ENCODE measurements at regions of chr13 and their contacts with region 1.

Region 1: GRCh38 chr13:26051657-26052311 is at the start of gene SHISA2:
- DNase-seq: peak; percentile 15
- H3K4me3 Mint-ChIP-seq: peak within 1 kb of the TSS; percentile 81
- H3K27ac Mint-ChIP-seq: peak within 1 kb of the TSS; percentile 72
- H3K4me1 Mint-ChIP-seq: peaks cover 35% of the 10 kb centered on the region
- H3K27me3 Mint-ChIP-seq: peaks cover 49% of the 10 kb centered on the region
- total RNA-seq, gene SHISA2: 9.4 and 9.5 TPM in 2 replicates

Region 2: DNA sequence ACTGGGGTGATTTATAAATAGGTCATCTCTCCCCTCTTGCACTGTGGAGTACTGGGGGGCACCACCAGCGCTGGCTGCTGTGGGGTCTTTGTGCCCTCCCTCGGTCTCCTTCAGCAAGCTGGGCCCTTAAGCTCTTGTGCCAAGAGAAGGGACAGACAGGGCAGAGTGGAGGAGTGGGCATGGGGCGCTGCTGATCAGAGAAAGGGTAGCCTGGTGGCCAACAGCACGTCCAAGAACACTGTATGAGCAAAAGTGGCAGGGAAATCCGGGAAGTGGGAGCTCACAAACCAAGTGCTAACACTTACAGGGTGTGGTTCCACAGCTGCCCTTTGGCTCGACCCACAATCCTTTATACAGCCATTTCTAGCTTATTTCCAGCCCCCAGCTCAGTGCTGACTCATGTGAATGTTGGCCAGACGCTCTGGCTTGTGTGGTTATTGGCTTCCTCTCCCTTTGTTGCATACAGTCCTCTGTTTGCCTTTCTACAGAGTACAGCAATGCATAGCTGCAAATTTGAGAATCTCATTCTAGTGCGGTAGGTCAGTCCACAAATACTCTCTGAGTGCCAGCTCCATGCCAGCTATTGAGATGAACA is 298.7 kb before region 1 on chr13:
- intact Hi-C with region 1: loop called (anchors 5 kb)
- DNase-seq: peak; percentile 35
- H3K4me3 Mint-ChIP-seq: peak overlapping the region; percentile 35
- H3K27ac Mint-ChIP-seq: peak overlapping the region; percentile 32
- H3K4me1 Mint-ChIP-seq: peaks cover 46% of the 10 kb centered on the region
- H3K27me3 Mint-ChIP-seq: no peaks in the 10 kb centered on the region

Region 3: DNA sequence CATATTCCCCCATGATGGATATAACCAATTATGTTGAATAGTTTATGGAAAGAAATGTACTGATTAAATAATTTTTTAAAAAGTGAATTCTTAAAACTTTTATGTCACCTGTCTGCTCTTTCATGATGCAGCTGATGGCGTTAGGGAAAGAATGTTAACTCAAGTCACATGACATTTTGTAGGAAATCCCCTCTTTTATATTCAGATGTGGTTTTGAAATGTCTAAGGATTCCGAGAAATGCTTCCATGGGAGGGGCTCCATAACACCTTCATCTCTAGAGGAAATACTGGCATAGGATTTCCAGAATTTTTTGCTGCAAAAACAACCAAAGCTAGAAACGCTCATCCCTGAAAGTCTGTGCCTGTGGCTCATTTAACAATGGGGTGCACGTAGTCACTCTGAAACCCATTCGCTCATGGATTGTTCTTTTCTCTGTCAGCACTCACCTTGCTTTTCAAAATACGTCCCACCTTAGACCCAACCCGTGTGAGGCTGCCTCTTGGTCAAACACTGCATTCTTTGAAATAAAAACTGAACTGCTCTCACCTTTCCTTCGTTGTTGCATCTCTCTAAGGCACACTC is 288.9 kb before region 1 on chr13:
- intact Hi-C with region 1: loop called (anchors 2 kb)
- DNase-seq: peak; percentile 19
- H3K4me3 Mint-ChIP-seq: peak overlapping the region; percentile 55
- H3K27ac Mint-ChIP-seq: peak overlapping the region; percentile 93
- H3K4me1 Mint-ChIP-seq: peaks cover 51% of the 10 kb centered on the region
- H3K27me3 Mint-ChIP-seq: no peaks in the 10 kb centered on the region

Region 4: GRCh38 chr13:25806264-25806974 is 245.4 kb before region 1 on chr13:
- intact Hi-C with region 1: loop called (anchors 2 kb)
- DNase-seq: peak; percentile 11
- H3K4me3 Mint-ChIP-seq: peak overlapping the region; percentile 61
- H3K27ac Mint-ChIP-seq: peak overlapping the region; percentile 87
- H3K4me1 Mint-ChIP-seq: peaks cover 28% of the 10 kb centered on the region
- H3K27me3 Mint-ChIP-seq: no peaks in the 10 kb centered on the region

Region 5: GRCh38 chr13:25847145-25847544 is 204.6 kb before region 1 on chr13:
- intact Hi-C with region 1: loop called (anchors 5 kb)
- DNase-seq: peak; percentile 12
- H3K4me3 Mint-ChIP-seq: peak overlapping the region; percentile 54
- H3K27ac Mint-ChIP-seq: peak overlapping the region; percentile 79
- H3K4me1 Mint-ChIP-seq: peaks cover 62% of the 10 kb centered on the region
- H3K27me3 Mint-ChIP-seq: peaks cover 5% of the 10 kb centered on the region

Region 6: DNA sequence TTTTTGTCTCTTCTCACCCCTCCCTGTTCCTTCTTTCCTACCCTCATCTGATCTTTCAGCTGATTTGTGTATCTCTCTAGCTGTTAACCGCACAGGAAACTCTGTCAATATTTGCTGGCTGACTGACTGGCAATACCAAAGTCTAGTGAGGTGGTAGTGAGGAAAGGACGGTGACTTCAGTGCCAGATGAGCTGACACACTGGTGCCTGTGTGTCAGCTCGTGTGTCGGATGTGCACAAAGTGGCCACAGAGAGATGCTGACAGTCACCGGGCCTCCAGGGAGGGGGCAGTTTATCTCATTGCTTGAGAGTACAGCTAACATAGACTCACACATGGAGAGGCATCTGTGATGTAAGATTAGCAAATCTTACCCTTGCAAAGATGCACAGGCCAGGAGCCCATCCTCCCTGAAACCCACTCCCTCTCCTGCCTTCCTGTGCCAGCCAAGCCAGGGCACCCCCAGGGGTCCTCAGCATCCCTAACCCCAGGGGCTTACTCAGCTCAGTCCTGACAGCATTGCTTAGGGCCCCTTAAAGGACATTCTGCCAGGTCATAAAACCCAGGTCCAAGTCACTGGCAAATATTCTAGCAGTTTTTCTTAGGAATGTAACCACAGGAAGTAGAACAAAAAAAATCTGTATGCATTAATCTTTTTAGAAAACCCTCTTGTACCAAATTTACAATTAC is 80.2 kb before region 1 on chr13:
- intact Hi-C with region 1: loop called (anchors 2 kb)
- DNase-seq: peak; percentile 37
- H3K4me3 Mint-ChIP-seq: no peak overlapping the region
- H3K27ac Mint-ChIP-seq: peak overlapping the region; percentile 50
- H3K4me1 Mint-ChIP-seq: peaks cover 55% of the 10 kb centered on the region
- H3K27me3 Mint-ChIP-seq: no peaks in the 10 kb centered on the region

Region 7: GRCh38 chr13:26011996-26012821 is 39.6 kb before region 1 on chr13:
- intact Hi-C with region 1: loop called (anchors 1 kb)
- DNase-seq: peak; percentile 56
- H3K4me3 Mint-ChIP-seq: peak overlapping the region; percentile 72
- H3K27ac Mint-ChIP-seq: peak overlapping the region; percentile 29
- H3K4me1 Mint-ChIP-seq: peaks cover 17% of the 10 kb centered on the region
- H3K27me3 Mint-ChIP-seq: no peaks in the 10 kb centered on the region

Region 8: GRCh38 chr13:26095338-26095737 is 43.6 kb after region 1 on chr13:
- intact Hi-C with region 1: no loop called
- DNase-seq: no peak
- H3K4me3 Mint-ChIP-seq: no peak overlapping the region
- H3K27ac Mint-ChIP-seq: no peak overlapping the region
- H3K4me1 Mint-ChIP-seq: no peaks in the 10 kb centered on the region
- H3K27me3 Mint-ChIP-seq: peaks cover 18% of the 10 kb centered on the region

Measured in activated T-helper 1 cell treated with anti-CD3 and anti-CD28 coated beads, Interleukin-12 subunit alpha, Interleukin-12 subunit beta, Interleukin-2, Interleukin-4 antibody, amounts not matched to agents 30 ng/mL and 10 ng/mL and 1 ng/mL, durations not matched to agents 14 hours and 24 hours and 36 hours (primary cell).